Esophagus muscularis mucosa (tissue), 4 donors: ENCODE measurements at regions of chr22 and their contacts with region 1.

Region 1: GRCh38 chr22:35947794-35948425 is 80.7 kb downstream of the RBFOX2 start:
- DNase-seq: no peak
- H3K4me3 ChIP-seq: no peak overlapping the region
- H3K27ac ChIP-seq: no peak overlapping the region
- H3K4me1 ChIP-seq: peaks cover 0 to 40% (median 26%) of the 10 kb centered on the region in 4 donors
- H3K27me3 ChIP-seq: no peaks in the 10 kb centered on the region
- CTCF ChIP-seq: no peak
- EP300 ChIP-seq: no peak
- POLR2A ChIP-seq: no peak

Region 2: DNA sequence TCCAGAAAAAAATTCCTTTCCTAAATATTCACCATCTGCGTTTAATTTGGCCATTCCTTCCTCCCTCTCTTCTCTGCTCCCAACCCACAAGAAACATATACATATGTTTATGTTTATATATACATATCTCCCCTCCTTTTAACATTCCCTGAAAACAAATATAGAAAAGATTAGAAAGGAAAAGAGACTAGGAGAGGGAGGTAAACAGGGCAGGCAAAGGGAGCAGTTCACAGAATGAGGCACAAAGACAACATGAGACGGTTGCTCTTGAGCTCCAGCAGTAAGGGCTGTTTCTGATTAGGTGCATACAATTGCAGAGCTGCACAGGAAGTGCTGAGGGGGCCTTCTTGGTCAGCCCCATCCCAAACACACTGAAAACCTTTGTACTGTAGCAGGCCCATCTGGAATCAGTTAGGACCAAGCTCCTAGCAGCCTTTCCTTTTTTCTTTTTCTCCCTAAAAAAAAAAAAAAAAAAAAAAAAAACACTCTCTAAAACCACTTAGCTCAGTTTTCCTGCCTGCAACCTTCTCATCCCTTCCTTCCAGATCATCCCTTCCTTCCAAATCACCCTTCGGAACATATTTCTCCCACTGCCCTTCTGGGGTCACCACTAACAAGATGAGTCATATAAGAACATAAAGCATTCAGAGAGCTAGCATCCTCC is 23.7 kb after region 1 on chr22:
- intact Hi-C with region 1: no loop called
- DNase-seq: no peak
- H3K4me3 ChIP-seq: no peak overlapping the region
- H3K27ac ChIP-seq: peak overlapping the region; percentile 80 to 84 (median 82)
- H3K4me1 ChIP-seq: peaks cover 48 to 89% (median 73%) of the 10 kb centered on the region in 4 donors
- H3K27me3 ChIP-seq: no peaks in the 10 kb centered on the region
- CTCF ChIP-seq: no peak
- EP300 ChIP-seq: no peak
- POLR2A ChIP-seq: no peak

Region 3: DNA sequence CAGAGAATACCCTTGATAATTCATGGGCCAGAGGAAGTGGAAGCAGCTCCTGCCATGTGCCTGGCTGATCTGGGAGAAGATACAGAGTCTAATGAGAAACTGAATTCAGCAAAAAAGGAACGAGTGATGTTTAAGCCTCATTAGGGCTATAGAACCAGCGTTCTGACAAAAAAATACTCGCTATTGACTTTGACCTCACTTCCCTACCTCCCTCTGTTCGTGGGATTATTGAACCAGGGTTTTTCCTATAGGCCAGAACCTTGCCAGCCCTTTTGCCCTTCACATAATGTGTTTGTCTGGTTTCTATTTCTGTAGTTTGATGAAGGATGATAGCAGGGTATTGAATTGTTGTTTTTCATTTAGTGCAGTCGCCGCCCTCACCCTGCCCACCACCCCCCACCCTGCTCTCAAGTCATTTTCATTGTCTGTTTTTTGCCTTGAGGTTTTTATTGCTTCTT is 88.3 kb after region 1 on chr22:
- intact Hi-C with region 1: loop called (anchors 5 kb)
- DNase-seq: no peak
- H3K4me3 ChIP-seq: no peak overlapping the region
- H3K27ac ChIP-seq: no peak overlapping the region
- H3K4me1 ChIP-seq: peaks cover 0 to 8% (median 2%) of the 10 kb centered on the region in 4 donors
- H3K27me3 ChIP-seq: no peaks in the 10 kb centered on the region
- CTCF ChIP-seq: no peak
- EP300 ChIP-seq: no peak
- POLR2A ChIP-seq: no peak